Tibial artery (tissue), 4 donors: ENCODE measurements at regions of chr17 and their contacts with region 1.

Region 1: DNA sequence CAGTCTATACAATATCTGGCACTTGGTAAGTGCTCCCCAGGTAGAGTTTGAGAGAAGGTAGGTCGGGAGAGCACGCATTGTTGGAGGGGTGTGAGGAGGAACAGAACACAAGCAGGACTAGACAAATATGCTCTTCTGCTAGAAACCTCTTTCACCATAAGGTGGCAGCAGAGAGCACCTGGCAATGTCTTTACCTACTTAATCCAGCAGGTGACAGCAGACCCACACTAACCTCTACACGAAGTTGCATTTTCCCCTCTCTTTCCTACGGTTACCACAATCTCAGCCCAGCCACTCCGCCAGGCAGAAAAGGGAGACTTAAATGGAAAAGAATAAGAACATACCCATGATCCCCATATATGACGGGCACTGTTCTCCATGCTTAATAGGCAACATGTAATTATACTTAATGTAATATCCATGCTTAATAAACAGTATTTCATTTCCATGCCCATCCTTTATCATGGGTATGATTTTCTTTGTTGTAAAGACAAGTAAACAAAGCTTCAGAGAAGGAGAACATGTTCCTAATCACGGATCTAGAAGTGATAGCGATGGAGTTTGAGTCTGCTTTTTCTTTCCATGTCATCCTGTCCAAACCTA is 55.1 kb upstream of the CCL2 start:
- DNase-seq: peak; percentile 76 to 81
- H3K4me3 ChIP-seq: no peak overlapping the region
- H3K27ac ChIP-seq: no peak overlapping the region
- H3K4me1 ChIP-seq: peaks cover 0 to 9% (median 2%) of the 10 kb centered on the region in 4 donors
- H3K27me3 ChIP-seq: peaks cover 0 to 5% of the 10 kb centered on the region in 2 donors
- CTCF ChIP-seq: peak; percentile 99 to 100

Region 2: GRCh38 chr17:33888455-33888854 is 311.6 kb before region 1 on chr17:
- intact Hi-C with region 1: no loop called
- DNase-seq: no peak
- H3K4me3 ChIP-seq: no peak overlapping the region
- H3K27ac ChIP-seq: no peak overlapping the region
- H3K4me1 ChIP-seq: no peaks in the 10 kb centered on the region
- H3K27me3 ChIP-seq: no peaks in the 10 kb centered on the region
- CTCF ChIP-seq: no peak

Region 3: DNA sequence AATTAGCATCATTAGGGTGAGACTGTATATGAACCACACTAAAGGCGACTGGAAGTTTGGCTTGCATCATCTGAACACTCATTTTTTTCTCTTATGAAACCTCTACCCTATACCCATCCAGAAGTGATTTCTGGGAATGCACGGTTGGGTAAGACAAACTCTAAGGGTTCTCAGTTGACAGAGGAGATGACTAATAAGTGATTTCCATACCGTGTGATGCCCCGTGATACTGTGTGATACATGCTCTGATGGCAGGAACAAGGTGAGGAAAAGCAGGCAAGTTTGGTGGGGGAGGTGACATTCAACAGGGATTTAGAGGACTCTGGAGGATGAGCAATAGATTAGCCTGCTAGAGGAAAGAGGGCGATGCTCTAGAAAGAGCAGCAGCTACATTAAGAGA is 101.3 kb before region 1 on chr17:
- intact Hi-C with region 1: no loop called
- DNase-seq: no peak
- H3K4me3 ChIP-seq: no peak overlapping the region
- H3K27ac ChIP-seq: no peak overlapping the region
- H3K4me1 ChIP-seq: no peaks in the 10 kb centered on the region
- H3K27me3 ChIP-seq: peaks cover 0 to 3% of the 10 kb centered on the region in 2 donors
- CTCF ChIP-seq: no peak

Region 4: DNA sequence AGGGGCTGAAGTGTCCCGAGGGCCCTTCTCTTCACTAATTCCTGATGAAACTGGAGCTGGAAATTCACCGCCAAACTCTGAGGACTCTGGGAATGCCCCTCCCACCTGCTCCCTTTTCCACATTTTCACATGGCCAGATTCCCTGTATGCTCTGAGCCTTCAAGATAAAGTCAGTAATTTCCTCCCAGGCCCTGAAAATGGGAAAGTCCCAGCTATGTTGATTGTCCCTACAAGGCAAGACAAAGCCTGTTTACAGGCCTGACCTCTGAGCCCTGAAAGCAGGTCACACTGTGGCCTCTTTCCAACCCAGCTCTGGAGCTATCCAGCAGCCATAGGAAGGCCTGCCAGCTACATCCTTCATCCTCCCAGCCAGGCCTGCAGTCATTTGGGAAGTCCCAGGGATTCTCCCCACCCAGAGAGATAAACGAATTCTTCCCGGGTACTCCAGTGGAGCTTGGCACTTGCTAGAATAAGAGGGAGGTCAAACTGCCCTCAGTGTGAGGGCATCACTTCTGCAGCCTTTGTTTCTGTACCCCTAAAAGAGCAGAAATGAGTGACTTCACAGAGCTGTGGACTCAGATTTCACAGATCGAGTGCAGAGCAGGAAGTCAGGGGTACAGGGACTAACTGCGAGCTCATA is 35.5 kb after region 1 on chr17:
- intact Hi-C with region 1: loop called (anchors 5 kb)
- DNase-seq: peak; percentile 68 to 79
- H3K4me3 ChIP-seq: no peak overlapping the region
- H3K27ac ChIP-seq: peak overlapping the region; percentile 41 to 63
- H3K4me1 ChIP-seq: peaks cover 7 to 40% (median 22%) of the 10 kb centered on the region in 4 donors
- H3K27me3 ChIP-seq: no peaks in the 10 kb centered on the region
- CTCF ChIP-seq: no peak

Region 5: GRCh38 chr17:34248511-34249024 is 48.5 kb after region 1 on chr17:
- intact Hi-C with region 1: no loop called
- DNase-seq: no peak
- H3K4me3 ChIP-seq: no peak overlapping the region
- H3K27ac ChIP-seq: peak overlapping the region; percentile 74 to 81
- H3K4me1 ChIP-seq: peaks cover 14 to 69% (median 62%) of the 10 kb centered on the region in 4 donors
- H3K27me3 ChIP-seq: no peaks in the 10 kb centered on the region
- CTCF ChIP-seq: no peak

Region 6: GRCh38 chr17:34259146-34259545 is 59.1 kb after region 1 on chr17:
- intact Hi-C with region 1: loop called (anchors 2 kb)
- DNase-seq: no peak
- H3K4me3 ChIP-seq: no peak overlapping the region
- H3K27ac ChIP-seq: no peak overlapping the region
- H3K4me1 ChIP-seq: peaks cover 0 to 34% (median 29%) of the 10 kb centered on the region in 4 donors
- H3K27me3 ChIP-seq: no peaks in the 10 kb centered on the region
- CTCF ChIP-seq: no peak

Region 7: GRCh38 chr17:34275881-34276280 is 75.8 kb after region 1 on chr17:
- intact Hi-C with region 1: no loop called
- DNase-seq: no peak
- H3K4me3 ChIP-seq: no peak overlapping the region
- H3K27ac ChIP-seq: no peak overlapping the region
- H3K4me1 ChIP-seq: no peaks in the 10 kb centered on the region
- H3K27me3 ChIP-seq: no peaks in the 10 kb centered on the region
- CTCF ChIP-seq: no peak

Region 8: GRCh38 chr17:34300652-34301370 is 100.8 kb after region 1 on chr17:
- intact Hi-C with region 1: loop called (anchors 5 kb)
- DNase-seq: no peak
- H3K4me3 ChIP-seq: no peak overlapping the region
- H3K27ac ChIP-seq: no peak overlapping the region
- H3K4me1 ChIP-seq: peaks cover 0 to 25% (median 5%) of the 10 kb centered on the region in 4 donors
- H3K27me3 ChIP-seq: no peaks in the 10 kb centered on the region
- CTCF ChIP-seq: no peak

Region 9: GRCh38 chr17:34361478-34362061 is 161.5 kb after region 1 on chr17:
- intact Hi-C with region 1: loop called (anchors 2 kb)
- DNase-seq: peak; percentile 90 to 93
- H3K4me3 ChIP-seq: no peak overlapping the region
- H3K27ac ChIP-seq: no peak overlapping the region
- H3K4me1 ChIP-seq: peaks cover 0 to 4% (median 0%) of the 10 kb centered on the region in 4 donors
- H3K27me3 ChIP-seq: peaks cover 0 to 16% of the 10 kb centered on the region in 2 donors
- CTCF ChIP-seq: peak; percentile 100